ENCODE measurements at regions of chr6 and their contacts with region 1.

Region 1: GRCh38 chr6:593139-593906 is 63.6 kb downstream of the HUS1B start:
- DNase-seq: peak; percentile 4
- H3K4me3 ChIP-seq: no peak overlapping the region
- CTCF ChIP-seq: peak; percentile 27

Region 2: GRCh38 chr6:610882-611281 is 17.6 kb after region 1 on chr6:
- CTCF ChIA-PET with region 1: interaction called, 30 read pairs
- POLR2A ChIA-PET with region 1: no interaction called
- DNase-seq: no peak
- H3K4me3 ChIP-seq: no peak overlapping the region
- CTCF ChIP-seq: no peak

Region 3: GRCh38 chr6:722077-722524 is 128.8 kb after region 1 on chr6:
- CTCF ChIA-PET with region 1: interaction called, 66 read pairs
- POLR2A ChIA-PET with region 1: no interaction called
- DNase-seq: peak; percentile 29
- H3K4me3 ChIP-seq: no peak overlapping the region
- CTCF ChIP-seq: peak; percentile 89

Region 4: DNA sequence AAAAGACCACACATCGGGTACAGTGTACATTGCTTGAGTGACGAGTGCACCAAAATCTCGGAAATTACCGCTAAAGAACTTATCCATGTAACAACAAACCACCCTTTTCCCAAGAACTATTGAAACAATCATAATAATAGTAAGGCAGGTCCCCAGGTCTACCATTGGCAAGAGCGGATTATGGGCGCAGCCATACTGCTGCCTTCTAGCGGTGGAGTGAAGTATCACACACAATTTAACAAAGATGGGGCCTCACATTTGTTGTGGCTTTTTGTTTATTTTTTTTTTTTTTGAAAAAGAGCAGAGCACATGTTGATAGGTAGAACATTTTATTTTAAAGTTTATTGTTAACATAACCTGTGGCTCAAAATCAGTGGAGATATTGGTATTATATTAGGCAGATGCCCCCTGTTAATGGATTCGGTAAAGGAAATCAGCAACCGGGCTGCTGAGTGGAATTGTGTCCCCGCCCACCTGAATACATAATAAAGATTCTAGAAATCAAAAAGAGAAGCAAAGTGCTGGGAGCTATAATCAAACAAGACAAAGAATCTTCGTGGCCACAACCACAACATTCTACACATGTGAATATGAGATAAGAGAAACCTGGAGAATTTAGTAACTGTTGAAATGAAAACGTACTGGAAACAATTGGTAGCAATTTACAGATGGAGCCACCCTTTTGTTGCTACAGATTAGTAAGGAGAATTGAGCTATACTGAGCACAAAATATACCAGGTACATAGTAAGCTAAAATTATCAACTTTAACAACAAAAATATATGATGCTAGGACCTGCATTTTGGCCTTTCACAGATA is 193.8 kb after region 1 on chr6:
- CTCF ChIA-PET with region 1: interaction called, 23 read pairs
- POLR2A ChIA-PET with region 1: no interaction called
- DNase-seq: no peak
- H3K4me3 ChIP-seq: no peak overlapping the region
- CTCF ChIP-seq: peak; percentile 42

Region 5: GRCh38 chr6:835476-836160 is 242.3 kb after region 1 on chr6:
- CTCF ChIA-PET with region 1: no interaction called
- POLR2A ChIA-PET with region 1: no interaction called
- DNase-seq: no peak
- H3K4me3 ChIP-seq: no peak overlapping the region
- CTCF ChIP-seq: no peak

Region 6: DNA sequence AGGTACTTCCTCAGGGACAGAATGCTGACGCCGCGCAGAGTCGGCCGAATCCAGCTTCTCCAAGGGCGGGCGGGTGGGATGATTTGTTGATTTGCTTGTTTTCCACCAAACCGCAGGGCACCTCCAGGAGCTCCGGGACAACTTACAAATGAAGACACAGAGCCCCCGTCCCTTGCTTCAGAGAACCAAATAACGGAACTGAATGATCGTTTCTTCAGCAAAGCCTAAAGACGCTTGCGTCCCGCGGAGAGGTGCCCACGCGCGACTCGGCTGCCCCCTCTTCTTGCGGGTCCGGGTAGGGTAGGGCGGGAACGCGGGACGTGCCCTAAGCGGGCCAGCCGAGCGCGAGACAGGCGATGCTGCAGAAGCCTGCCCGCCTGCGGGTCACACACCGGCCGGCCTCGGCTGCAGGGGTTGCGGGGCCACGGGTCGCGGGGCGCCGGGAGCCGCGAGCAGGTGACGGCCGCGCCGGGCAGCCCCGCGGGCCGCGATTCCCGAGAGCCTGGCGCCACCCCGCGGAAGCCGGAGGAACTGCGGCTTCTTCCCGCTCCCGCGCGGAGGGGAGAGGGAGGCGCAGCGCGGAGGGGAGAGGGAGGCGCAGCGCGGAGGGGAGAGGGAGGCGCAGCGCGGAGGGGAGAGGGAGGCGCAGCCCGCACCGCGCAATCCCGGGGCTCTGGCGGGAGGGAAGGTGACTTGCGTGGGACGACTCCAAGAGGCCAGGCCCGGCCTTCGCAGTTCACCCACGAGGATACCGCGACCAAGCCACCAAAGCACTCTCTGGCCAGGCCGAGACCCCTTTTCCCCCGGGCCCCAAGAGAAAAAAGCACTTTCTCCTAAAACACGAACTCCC is 788.4 kb after region 1 on chr6:
- CTCF ChIA-PET with region 1: interaction called, 18 read pairs
- POLR2A ChIA-PET with region 1: no interaction called
- DNase-seq: no peak
- H3K4me3 ChIP-seq: no peak overlapping the region
- CTCF ChIP-seq: peak; percentile 79

Region 7: GRCh38 chr6:1424306-1424928 is 831.1 kb after region 1 on chr6:
- CTCF ChIA-PET with region 1: interaction called, 23 read pairs
- POLR2A ChIA-PET with region 1: no interaction called
- DNase-seq: no peak
- H3K4me3 ChIP-seq: no peak overlapping the region
- CTCF ChIP-seq: peak; percentile 57

Measured in AG04449 (cell line).